GM18951 (cell line): ENCODE measurements at regions of chr9 and their contacts with region 1.

Region 1: GRCh38 chr9:96854073-96854876 is at the start of gene ZNF782:
- POLR2A ChIP-seq: peak; percentile 69

Region 2: DNA sequence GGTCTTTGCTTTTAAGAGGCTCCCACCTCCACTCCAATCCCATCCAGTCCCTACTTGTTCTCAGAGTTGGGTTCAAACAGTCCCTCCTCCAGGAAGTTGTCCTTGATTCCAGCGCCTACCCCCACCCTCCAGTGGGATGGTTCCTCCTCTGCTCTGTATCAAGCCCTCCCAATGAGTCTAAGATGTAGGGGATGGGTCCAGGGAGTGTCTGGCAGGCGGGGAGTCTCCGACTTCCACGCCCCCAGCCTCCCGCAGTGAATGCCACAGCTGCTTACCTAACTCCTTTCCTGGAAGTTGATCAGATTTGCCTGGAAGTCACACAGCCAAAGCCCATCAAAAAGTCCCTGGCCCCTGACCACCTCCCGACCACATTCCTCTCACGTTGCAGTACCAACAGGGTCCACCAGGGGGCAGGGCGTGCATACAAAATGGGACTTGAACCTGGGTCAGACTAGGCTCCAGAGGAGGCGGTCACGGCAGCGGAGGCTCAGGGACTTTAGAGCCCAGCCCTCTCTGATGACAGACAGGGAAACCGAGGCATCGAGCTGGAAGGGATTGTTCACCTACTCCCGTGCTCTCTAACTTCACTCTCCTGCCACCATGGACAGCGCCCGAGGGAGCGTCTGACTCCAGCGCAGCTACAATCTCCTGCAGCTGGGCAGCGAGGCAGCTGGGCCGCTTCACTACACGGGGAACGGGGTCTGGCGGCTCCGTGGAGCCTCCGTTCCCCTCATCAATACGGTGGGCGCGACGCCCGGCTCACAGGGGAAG is 532.6 kb after region 1 on chr9:
- in situ Hi-C with region 1: loop called (anchors 25 kb)
- POLR2A ChIP-seq: no peak

Region 3: DNA sequence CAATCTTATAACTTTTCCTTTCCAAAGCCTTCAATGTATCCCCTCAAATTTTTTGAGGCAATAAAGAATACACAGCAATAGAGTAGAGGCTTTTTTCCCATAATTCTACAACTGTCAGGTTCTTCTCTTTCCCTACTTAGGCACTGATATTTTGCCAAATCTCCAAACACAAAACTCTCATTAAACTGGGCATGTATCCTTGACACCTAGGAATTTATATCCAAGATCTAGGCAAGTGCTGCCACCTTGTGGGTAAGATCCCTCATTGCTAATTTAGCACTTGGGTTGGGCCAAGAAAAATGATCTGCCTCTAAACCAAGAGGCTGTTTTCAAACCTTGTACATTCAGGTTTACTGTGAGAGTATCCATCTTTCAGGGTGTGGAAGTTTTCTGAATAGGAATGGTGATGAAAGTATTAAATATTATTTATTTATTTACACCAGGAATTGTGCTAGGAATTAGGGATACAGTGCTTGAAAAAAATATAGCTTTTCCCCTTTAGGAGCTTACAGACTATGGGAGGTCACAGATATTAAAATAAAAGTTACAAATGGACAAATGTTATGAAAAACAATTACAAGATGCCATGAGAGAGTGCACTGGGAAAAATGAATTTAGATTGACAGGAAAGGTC is 761.3 kb after region 1 on chr9:
- in situ Hi-C with region 1: loop called (anchors 25 kb)
- POLR2A ChIP-seq: no peak